ENCODE measurements at regions of chr2 and their contacts with region 1.

Region 1: GRCh38 chr2:10122386-10123280 is at the start of gene RRM2:
- DNase-seq: peak; percentile 74 to 94 (median 84)
- ATAC-seq: peak; percentile 82
- H3K4me3 ChIP-seq: peak within 1 kb of the TSS; percentile 55
- H3K4me3 Mint-ChIP-seq: peak within 1 kb of the TSS; percentile 80 to 99 (median 98)
- H3K27ac ChIP-seq: peak within 1 kb of the TSS; percentile 34
- H3K27ac Mint-ChIP-seq: peak within 1 kb of the TSS in 6 of 9 donors; percentile 17 to 99 (median 69)
- H3K4me1 ChIP-seq: peaks cover 24 to 29% of the 10 kb centered on the region in 2 donors
- H3K4me1 Mint-ChIP-seq: peaks cover 21 to 76% (median 41%) of the 10 kb centered on the region in 7 donors
- H3K27me3 ChIP-seq: peaks cover 0 to 7% of the 10 kb centered on the region in 2 donors
- H3K27me3 Mint-ChIP-seq: peaks cover 0 to 24% (median 10%) of the 10 kb centered on the region in 5 donors
- total RNA-seq, gene RRM2: 0.13 to 330 (median 0.51) TPM

Region 2: DNA sequence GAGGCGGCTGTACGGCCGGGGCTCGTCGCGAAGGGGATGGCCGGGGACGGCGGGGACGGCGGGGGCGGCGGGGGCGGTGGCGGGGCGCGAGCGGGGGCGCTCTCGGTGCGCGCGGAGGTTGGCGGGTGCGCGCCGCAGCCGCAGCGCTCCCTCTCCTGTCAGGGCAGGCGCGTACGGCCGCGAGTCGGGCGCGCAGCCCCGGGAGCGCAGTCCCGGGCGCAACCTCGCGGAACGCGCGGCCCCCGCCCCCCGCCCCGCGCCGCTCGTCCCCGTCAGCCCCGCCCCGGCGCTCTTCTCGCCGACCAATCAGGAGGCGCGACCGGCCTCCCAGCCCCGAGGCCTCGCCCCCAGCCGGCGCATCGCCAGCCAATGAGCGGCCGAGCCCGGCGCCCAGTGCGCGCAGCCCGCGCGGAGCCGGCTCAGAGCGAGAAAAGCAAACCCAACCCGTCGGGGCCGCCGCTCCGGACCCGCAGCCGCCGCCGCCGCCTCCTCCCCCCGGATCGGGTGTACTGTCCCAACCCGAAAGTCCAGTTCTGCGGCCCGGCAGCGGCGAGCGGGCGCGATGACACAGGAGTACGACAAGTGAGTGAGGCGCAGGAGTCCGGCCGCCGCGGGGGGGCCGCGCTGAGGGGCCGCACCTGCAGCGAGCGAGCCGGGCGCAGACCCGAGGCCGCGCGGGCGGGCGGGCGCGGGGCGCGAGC is 171.2 kb before region 1 on chr2 and contains the start of gene GRHL1:
- CTCF ChIA-PET with region 1: no interaction called
- POLR2A ChIA-PET with region 1: no interaction called
- intact Hi-C with region 1: loop called (anchors 1 to 2 kb)
- DNase-seq: peak; percentile 82 to 95 (median 90)
- ATAC-seq: peak; percentile 97
- H3K4me3 ChIP-seq: peak within 1 kb of the TSS; percentile 57
- H3K4me3 Mint-ChIP-seq: peak within 1 kb of the TSS; percentile 70 to 90 (median 86)
- H3K27ac ChIP-seq: peak within 1 kb of the TSS; percentile 63
- H3K27ac Mint-ChIP-seq: peak within 1 kb of the TSS in 7 of 9 donors; percentile 15 to 77 (median 56)
- H3K4me1 ChIP-seq: no peaks in the 10 kb centered on the region
- H3K4me1 Mint-ChIP-seq: peaks cover 0 to 13% (median 8%) of the 10 kb centered on the region in 7 donors
- H3K27me3 ChIP-seq: no peaks in the 10 kb centered on the region
- H3K27me3 Mint-ChIP-seq: peaks cover 19 to 77% (median 39%) of the 10 kb centered on the region in 5 donors
- total RNA-seq, gene GRHL1: 0.19 to 1.3 (median 0.56) TPM

Region 3: GRCh38 chr2:10079870-10080535 is 42.6 kb before region 1 on chr2 and contains the start of gene CYS1:
- CTCF ChIA-PET with region 1: no interaction called
- POLR2A ChIA-PET with region 1: no interaction called
- intact Hi-C with region 1: loop called in 1 of 2 experiments (anchors 2 kb)
- DNase-seq: peak in 1 of 9 donors; percentile 47
- ATAC-seq: peak; percentile 36
- H3K4me3 ChIP-seq: peak within 1 kb of the TSS; percentile 32
- H3K4me3 Mint-ChIP-seq: peak within 1 kb of the TSS; percentile 78 to 96 (median 87)
- H3K27ac ChIP-seq: no peak within 1 kb of the TSS
- H3K27ac Mint-ChIP-seq: peak within 1 kb of the TSS in 5 of 9 donors; percentile 49 to 64 (median 51)
- H3K4me1 ChIP-seq: peaks cover 9 to 11% of the 10 kb centered on the region in 2 donors
- H3K4me1 Mint-ChIP-seq: peaks cover 9 to 25% (median 14%) of the 10 kb centered on the region in 7 donors
- H3K27me3 ChIP-seq: peaks cover 0 to 13% of the 10 kb centered on the region in 2 donors
- H3K27me3 Mint-ChIP-seq: peaks cover 73 to 83% (median 79%) of the 10 kb centered on the region in 5 donors
- total RNA-seq, gene CYS1: 1.3 TPM in 1 of 5 experiments, not detected in the others

Region 4: DNA sequence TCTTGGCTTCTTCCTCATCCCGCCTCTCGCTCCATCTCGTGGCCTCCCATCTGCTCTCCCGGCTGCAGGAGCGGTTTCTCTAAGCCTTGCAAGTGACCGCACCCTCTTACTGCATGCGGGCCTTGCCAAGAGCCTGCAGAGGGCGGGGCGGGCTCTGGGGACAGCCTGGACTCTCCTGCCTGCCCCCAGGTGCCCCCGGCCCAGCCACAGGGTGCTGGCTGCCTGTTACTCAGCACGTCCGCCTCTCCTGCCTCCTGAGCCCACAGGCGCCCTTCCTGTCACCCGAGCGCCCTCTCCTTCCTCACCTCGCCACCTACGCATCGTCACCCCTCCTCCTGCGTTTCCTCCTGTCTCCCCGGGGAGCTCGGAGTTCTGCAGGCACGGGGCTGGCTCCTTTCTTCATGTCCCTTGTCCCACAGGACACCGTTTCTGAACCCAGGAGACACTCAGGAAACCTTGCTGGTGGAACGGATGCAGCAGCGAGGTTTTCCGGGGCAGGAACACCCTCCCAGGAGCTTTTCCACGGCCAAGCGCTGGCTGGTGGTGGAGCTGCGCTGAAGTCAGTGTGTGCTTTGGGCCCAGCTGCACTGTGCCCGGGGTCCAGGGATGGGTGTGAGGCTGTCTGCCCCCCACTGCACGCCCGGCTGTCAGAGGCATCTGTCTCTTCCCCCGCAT is 208.5 kb after region 1 on chr2:
- CTCF ChIA-PET with region 1: interaction called, 5 read pairs
- POLR2A ChIA-PET with region 1: no interaction called
- intact Hi-C with region 1: loop called (anchors 2 to 10 kb)
- DNase-seq: peak; percentile 41 to 79 (median 70)
- ATAC-seq: peak; percentile 58
- H3K4me3 ChIP-seq: peak overlapping the region; percentile 80
- H3K4me3 Mint-ChIP-seq: peak overlapping the region; percentile 85 to 97 (median 94)
- H3K27ac ChIP-seq: peak overlapping the region; percentile 82
- H3K27ac Mint-ChIP-seq: peak overlapping the region; percentile 92 to 99 (median 98)
- H3K4me1 ChIP-seq: peaks cover 32 to 65% of the 10 kb centered on the region in 2 donors
- H3K4me1 Mint-ChIP-seq: peaks cover 58 to 96% (median 93%) of the 10 kb centered on the region in 7 donors
- H3K27me3 ChIP-seq: no peaks in the 10 kb centered on the region
- H3K27me3 Mint-ChIP-seq: no peaks in the 10 kb centered on the region

Region 5: DNA sequence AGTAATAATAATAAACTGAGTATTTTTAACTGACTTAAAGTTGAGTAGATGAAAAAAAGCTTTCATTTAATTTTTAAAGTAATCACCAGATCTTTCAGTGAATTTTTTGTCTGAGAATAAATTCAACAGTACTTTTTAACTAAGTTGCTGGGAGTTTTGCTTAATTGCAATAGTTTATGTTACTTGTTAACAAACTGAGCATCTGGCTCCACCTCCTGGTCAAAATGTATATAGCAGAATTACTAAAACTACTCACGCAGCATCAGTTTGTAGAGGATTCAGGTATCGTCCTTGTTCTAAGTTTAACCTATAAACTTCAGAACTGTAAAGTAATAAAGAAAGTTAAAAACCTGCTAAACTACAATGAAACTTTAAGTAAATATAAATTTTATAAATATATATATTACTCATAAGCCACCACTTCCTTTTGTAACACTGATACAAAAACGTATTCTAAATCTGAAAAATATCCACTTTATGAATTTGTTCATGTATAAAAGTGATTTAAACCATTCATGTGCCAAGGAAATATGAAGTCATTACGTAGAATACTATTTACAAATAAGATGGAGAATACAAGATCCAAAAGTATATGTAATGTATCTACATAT is 545.9 kb after region 1 on chr2:
- CTCF ChIA-PET with region 1: no interaction called
- POLR2A ChIA-PET with region 1: no interaction called
- intact Hi-C with region 1: loop called (anchors 1 to 2 kb)
- DNase-seq: peak in 7 of 9 donors; percentile 39 to 63 (median 56)
- ATAC-seq: peak; percentile 71
- H3K4me3 ChIP-seq: no peak overlapping the region
- H3K4me3 Mint-ChIP-seq: no peak overlapping the region
- H3K27ac ChIP-seq: no peak overlapping the region
- H3K27ac Mint-ChIP-seq: no peak overlapping the region
- H3K4me1 ChIP-seq: no peaks in the 10 kb centered on the region
- H3K4me1 Mint-ChIP-seq: peaks cover 0 to 6% (median 0%) of the 10 kb centered on the region in 7 donors
- H3K27me3 ChIP-seq: no peaks in the 10 kb centered on the region
- H3K27me3 Mint-ChIP-seq: no peaks in the 10 kb centered on the region

Region 6: DNA sequence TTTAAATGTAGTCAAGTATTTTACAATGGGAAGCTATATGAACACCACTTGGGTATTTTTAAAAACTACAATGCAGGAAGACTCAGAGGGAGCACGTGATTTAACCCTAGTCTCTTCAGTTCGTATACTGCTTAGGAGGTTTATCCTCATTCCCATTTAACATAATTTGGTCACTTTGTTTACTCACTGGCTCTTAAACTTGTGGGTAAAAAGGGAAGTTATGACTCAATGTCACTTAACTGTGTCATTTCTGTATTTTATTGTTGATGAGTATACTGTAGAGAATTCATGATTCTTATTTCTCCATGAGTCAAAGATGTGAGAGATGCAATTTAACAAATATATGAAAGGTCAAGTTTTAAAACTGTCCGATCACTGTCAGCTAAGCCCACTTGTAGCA is 1080.8 kb after region 1 on chr2:
- CTCF ChIA-PET with region 1: no interaction called
- POLR2A ChIA-PET with region 1: no interaction called
- intact Hi-C with region 1: no loop called
- DNase-seq: no peak
- ATAC-seq: peak; percentile 86
- H3K4me3 ChIP-seq: no peak overlapping the region
- H3K4me3 Mint-ChIP-seq: no peak overlapping the region
- H3K27ac ChIP-seq: no peak overlapping the region
- H3K27ac Mint-ChIP-seq: peak overlapping the region in 1 of 9 donors; percentile 9
- H3K4me1 ChIP-seq: no peaks in the 10 kb centered on the region
- H3K4me1 Mint-ChIP-seq: peaks cover 0 to 16% (median 3%) of the 10 kb centered on the region in 7 donors
- H3K27me3 ChIP-seq: no peaks in the 10 kb centered on the region
- H3K27me3 Mint-ChIP-seq: no peaks in the 10 kb centered on the region

Measured in naive thymus-derived CD4-positive, alpha-beta T cell (primary cell).